ENCODE measurements at regions of chr3 and their contacts with region 1.

Region 1: DNA sequence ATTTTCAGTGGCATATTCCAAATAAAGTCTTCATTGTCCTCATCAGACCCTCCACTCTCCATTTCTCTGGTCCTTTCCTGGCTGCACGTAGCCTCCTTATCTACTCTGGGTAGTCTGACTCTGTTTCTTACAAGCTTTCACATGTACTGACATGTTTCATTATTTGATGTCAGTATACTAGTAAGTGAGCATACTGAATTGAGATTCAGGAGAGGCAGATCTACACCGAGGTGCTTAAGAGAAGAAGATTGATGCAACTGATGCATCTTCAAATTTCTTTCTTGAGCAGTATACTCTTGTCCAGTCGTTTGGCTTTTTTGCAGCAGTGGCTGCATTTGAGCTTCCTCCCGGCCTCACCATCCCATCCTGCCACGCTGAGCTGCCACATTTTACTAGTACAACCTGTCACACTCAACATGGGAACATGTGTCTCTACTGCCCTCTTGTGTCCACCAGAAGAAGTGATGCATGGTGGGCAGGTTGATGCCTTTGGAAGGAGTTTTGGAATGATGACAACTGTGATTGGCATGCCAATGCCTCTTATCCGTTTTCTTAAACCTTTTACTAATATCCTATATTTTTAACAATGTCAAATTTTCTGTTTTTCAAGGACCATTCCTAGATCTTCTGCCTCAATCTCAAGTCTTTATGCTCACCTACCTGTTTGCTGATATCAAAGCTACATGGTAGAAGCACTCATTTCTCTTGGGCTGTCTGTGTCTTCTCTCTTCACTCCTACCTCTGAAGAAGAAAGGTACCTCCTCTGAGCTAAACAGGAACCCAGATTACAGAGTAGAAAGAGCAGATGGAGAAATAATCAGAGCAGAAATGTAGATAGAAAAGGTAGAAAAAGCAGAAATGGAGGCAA is 38.7 kb downstream of the GUCA1C start:
- DNase-seq: peak; percentile 61
- ATAC-seq: peak; percentile 96
- H3K4me3 ChIP-seq: no peak overlapping the region
- H3K27ac ChIP-seq: no peak overlapping the region
- H3K4me1 ChIP-seq: no peaks in the 10 kb centered on the region
- H3K27me3 ChIP-seq: no peaks in the 10 kb centered on the region
- CTCF ChIP-seq: peak; percentile 90
- EP300 ChIP-seq: no peak
- POLR2A ChIP-seq: no peak
- RAD21 ChIP-seq: peak; percentile 41; the same call in 1 of the 2 replicates

Region 2: GRCh38 chr3:108673988-108674661 is 240.9 kb before region 1 on chr3:
- CTCF ChIA-PET with region 1: no interaction called
- POLR2A ChIA-PET with region 1: no interaction called
- in situ Hi-C with region 1: loop called (anchors 5 kb)
- intact Hi-C with region 1: no loop called
- DNase-seq: no peak
- ATAC-seq: no peak
- H3K4me3 ChIP-seq: no peak overlapping the region
- H3K27ac ChIP-seq: no peak overlapping the region
- H3K4me1 ChIP-seq: no peaks in the 10 kb centered on the region
- H3K27me3 ChIP-seq: no peaks in the 10 kb centered on the region
- CTCF ChIP-seq: no peak
- EP300 ChIP-seq: no peak
- POLR2A ChIP-seq: no peak
- RAD21 ChIP-seq: no peak

Region 3: DNA sequence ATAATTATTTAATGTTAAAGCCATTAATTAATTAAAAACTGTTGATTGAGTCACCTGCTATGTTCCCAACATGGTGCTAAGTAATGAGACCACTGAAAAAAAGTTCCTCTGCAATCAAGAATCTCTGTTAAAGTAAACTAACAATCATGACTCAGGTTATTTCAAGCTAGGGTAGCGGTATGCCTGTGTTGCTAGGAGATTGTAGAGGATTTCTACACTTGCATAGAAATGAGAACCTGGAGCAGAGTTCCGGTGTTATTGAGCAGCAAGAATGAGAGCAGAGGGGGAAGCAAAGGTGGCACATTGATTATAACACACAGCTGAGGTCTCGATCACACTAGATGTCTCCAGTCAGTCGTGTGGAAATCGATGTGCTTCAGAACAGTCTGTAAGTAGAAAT is 262.9 kb after region 1 on chr3:
- CTCF ChIA-PET with region 1: no interaction called
- POLR2A ChIA-PET with region 1: no interaction called
- in situ Hi-C with region 1: no loop called
- intact Hi-C with region 1: no loop called
- DNase-seq: no peak
- ATAC-seq: no peak
- H3K4me3 ChIP-seq: no peak overlapping the region
- H3K27ac ChIP-seq: no peak overlapping the region
- H3K4me1 ChIP-seq: no peaks in the 10 kb centered on the region
- H3K27me3 ChIP-seq: no peaks in the 10 kb centered on the region
- CTCF ChIP-seq: no peak
- EP300 ChIP-seq: no peak
- POLR2A ChIP-seq: no peak
- RAD21 ChIP-seq: no peak

Measured in HepG2 (cell line).